Sigmoid colon (tissue), 7 donors: ENCODE measurements at regions of chr1 and their contacts with region 1.

Region 1: DNA sequence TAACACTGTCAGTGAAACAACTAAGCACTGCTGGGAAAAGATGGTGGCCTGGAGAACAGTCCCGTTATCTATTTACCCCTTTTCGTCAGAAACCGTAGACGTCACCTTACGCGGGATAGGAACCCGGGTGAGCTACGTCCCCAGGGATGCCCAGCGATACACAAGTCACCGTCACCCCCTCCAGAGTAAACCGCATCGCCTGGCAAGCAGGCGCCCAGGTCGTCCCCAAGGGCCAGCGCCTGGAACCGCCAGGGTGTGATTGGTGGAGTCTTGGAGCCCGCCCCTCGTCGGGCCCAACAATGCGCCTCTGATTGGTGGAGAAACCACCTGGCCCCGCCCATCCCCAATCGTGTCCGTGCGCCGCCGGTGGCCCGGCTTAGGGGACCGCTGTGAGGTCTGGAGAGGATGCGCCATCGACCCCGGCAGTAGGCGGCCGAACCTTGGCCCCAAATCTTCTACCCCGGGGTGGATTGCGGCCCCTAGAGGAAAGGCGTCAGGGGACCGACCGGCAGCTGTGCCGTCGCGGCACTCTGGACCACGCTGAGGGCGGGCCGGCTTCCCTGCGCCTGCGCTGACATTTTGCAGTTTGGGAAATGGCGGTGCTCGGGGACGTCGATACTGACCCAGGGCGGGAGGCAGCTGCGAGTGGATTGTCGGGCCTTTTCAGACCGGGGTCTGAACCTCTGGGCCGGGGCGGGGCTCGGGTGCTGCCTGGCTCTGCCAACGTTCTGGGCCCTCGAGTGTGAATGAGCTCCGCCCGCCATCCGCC is 34.4 kb downstream of the SLC2A1 start:
- DNase-seq: peak; percentile 97
- H3K4me3 ChIP-seq: peak overlapping the region; percentile 58 to 94 (median 71)
- H3K27ac ChIP-seq: peak overlapping the region; percentile 88 to 97 (median 94)
- H3K4me1 ChIP-seq: peaks cover 0 to 14% (median 9%) of the 10 kb centered on the region in 4 donors
- H3K27me3 ChIP-seq: no peaks in the 10 kb centered on the region
- CTCF ChIP-seq: no peak
- EP300 ChIP-seq: no peak
- POLR2A ChIP-seq: peak; percentile 73 to 86

Region 2: GRCh38 chr1:42816585-42817434 is 107.5 kb before region 1 on chr1 and contains the starts of genes ERMAP and SVBP:
- intact Hi-C with region 1: loop called (anchors 2 kb)
- DNase-seq: peak; percentile 95
- H3K4me3 ChIP-seq: peak within 1 kb of the TSS; percentile 66 to 82 (median 77)
- H3K27ac ChIP-seq: peak within 1 kb of the TSS; percentile 96 to 98 (median 98)
- H3K4me1 ChIP-seq: peaks cover 0 to 21% (median 14%) of the 10 kb centered on the region in 4 donors
- H3K27me3 ChIP-seq: no peaks in the 10 kb centered on the region
- CTCF ChIP-seq: no peak
- EP300 ChIP-seq: no peak
- POLR2A ChIP-seq: no peak
- total RNA-seq, gene ERMAP: 7.9 to 18.6 (median 11.9) TPM
- total RNA-seq, gene SVBP: 34.6 to 48.1 (median 40.6) TPM

Region 3: DNA sequence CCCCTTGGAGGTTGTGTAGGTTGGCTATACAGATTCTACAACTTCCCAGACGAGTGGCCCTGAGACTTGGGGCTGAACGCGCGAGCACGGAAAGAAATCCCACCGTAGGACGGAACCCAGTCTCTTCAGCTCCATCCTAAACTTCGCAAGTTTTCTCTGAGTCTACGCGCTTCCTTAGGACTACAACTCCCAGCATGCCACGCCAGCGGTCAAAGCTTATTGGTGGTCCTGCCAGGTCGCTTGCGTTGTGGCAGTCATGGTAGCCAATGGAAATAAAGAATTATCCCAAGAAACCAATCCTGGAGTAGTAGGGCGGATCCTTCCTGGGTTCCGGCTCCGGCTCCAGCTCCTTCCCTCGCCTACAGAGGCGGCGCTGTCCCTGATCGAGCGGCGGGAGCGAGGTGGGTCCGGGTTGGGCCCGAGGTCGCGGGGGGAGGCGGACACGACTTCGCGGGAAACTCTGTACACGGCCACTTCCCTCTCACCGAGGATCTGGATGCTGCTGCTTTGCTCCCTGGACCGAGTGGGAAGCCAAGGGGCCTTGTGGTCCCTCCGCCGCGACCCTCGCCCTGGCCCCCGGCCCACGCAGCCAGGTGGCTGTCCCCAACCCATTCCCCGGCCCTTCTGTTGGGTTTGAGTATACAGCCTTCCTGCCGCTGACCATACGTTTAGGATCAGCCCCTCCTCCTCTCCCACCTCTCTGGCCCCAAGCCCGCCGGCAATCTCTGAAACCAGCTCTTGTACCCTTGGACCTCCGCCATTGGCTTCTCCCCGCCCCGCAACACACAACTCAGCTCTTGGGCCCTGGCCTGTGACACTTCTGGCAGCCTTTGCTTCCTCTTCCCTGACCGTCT is 77.8 kb before region 1 on chr1 and contains the start of gene ZNF691:
- intact Hi-C with region 1: loop called (anchors 5 kb)
- DNase-seq: peak; percentile 98
- H3K4me3 ChIP-seq: peak within 1 kb of the TSS; percentile 65 to 99 (median 90)
- H3K27ac ChIP-seq: peak within 1 kb of the TSS; percentile 85 to 90 (median 87)
- H3K4me1 ChIP-seq: peaks cover 0 to 23% (median 9%) of the 10 kb centered on the region in 4 donors
- H3K27me3 ChIP-seq: no peaks in the 10 kb centered on the region
- CTCF ChIP-seq: peak in 2 of 4 experiments; percentile 15 to 39
- EP300 ChIP-seq: no peak
- POLR2A ChIP-seq: peak; percentile 27 to 39
- total RNA-seq, gene ZNF691: 8.3 to 20.7 (median 15.2) TPM

Region 4: GRCh38 chr1:42860339-42861013 is 63.8 kb before region 1 on chr1:
- intact Hi-C with region 1: no loop called
- DNase-seq: no peak
- H3K4me3 ChIP-seq: no peak overlapping the region
- H3K27ac ChIP-seq: no peak overlapping the region
- H3K4me1 ChIP-seq: no peaks in the 10 kb centered on the region
- H3K27me3 ChIP-seq: peaks cover 0 to 18% (median 0%) of the 10 kb centered on the region in 3 donors
- CTCF ChIP-seq: no peak
- EP300 ChIP-seq: no peak
- POLR2A ChIP-seq: no peak

Region 5: DNA sequence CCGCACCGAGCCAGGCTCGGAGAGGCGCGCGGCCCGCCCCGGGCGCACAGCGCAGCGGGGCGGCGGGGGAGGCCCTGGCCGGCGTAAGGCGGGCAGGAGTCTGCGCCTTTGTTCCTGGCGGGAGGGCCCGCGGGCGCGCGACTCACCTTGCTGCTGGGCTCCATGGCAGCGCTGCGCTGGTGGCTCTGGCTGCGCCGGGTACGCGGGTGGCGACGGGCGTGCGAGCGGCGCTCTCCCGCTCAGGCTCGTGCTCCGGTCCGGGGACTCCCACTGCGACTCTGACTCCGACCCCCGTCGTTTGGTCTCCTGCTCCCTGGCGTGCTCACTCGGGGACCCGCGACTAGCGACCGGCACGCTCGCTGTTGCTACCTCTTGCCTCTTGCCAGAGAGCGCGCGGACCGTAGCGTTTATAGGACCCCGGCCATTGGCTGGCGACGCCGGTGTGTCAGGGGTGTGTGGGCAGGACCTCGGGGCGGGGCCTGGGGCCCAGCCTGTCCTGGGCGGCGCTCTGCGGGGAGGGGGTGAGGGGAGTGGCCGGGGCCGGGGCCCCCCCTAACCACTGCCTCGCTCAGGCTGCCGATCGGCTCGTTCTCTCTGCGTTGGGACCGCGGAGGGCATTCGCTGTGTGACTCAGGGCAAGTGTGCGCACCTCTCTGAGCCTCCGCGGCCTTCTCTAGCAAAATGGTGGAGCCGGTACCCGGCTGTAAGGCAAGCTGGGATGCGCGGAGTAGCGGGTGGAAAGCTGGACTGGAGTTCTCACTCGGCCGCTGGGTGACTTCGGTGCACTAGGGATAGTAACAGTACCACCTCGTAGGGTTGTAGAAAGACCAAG is 34.4 kb after region 1 on chr1 and contains the start of gene SLC2A1:
- intact Hi-C with region 1: loop called (anchors 1 kb)
- DNase-seq: peak; percentile 95
- H3K4me3 ChIP-seq: peak within 1 kb of the TSS; percentile 70 to 85 (median 78)
- H3K27ac ChIP-seq: peak within 1 kb of the TSS; percentile 90 to 92 (median 91)
- H3K4me1 ChIP-seq: peaks cover 0 to 51% (median 37%) of the 10 kb centered on the region in 4 donors
- H3K27me3 ChIP-seq: no peaks in the 10 kb centered on the region
- CTCF ChIP-seq: no peak
- EP300 ChIP-seq: no peak
- POLR2A ChIP-seq: peak; percentile 78 to 91
- total RNA-seq, gene SLC2A1: 7.7 to 33.5 (median 15.3) TPM